ENCODE measurements at regions of chr11 and their contacts with region 1.

Region 1: GRCh38 chr11:95705485-95706124 is 84.0 kb downstream of the FAM76B start:
- H3K4me3 ChIP-seq: no peak overlapping the region
- H3K27ac ChIP-seq: no peak overlapping the region
- H3K4me1 ChIP-seq: no peaks in the 10 kb centered on the region
- CTCF ChIP-seq: peak; percentile 58; the same call in 1 of the 2 replicates

Region 2: DNA sequence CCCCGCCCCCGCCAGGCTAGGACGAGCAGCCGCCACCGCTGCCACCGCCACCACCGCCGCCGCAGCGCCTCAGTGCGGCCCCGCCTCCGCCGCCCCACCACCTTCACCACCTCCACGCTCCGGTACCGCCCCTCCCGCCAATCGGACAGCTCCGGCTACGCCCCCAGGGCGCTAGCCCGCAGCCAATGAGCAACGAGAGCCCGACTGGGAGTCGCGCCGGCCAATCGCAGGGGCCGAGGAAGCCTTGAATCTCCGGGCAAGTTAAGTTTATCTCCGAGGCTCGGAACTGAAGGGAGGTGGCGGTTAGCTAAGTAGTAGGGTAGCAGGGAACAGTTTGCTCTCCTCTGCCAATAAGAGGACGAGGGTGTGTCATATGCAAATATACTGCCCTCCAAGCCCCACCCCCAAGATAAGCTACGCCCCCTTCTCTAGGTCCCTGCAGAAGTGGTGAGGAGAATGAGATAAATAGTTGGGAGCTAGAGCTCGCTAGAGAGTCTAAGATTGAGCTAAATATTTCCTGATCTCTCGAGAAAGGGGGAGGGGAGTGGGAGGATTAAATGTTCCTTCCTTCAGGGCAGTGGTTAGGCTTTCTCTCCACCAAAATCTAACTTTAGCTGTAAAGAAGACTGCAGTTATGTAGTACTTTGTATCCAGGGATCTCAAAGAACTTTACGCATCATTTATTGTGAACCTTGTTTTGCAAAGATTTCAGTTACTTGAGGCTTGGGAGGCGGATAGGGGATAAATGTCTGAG is 474.3 kb before region 1 on chr11 and contains the start of gene SESN3:
- CTCF ChIA-PET with region 1: interaction called, 12 read pairs
- POLR2A ChIA-PET with region 1: interaction called, 5 read pairs
- H3K4me3 ChIP-seq: peak within 1 kb of the TSS; percentile 82
- H3K27ac ChIP-seq: peak within 1 kb of the TSS; percentile 87
- H3K4me1 ChIP-seq: peaks cover 6% of the 10 kb centered on the region
- CTCF ChIP-seq: no peak

Region 3: DNA sequence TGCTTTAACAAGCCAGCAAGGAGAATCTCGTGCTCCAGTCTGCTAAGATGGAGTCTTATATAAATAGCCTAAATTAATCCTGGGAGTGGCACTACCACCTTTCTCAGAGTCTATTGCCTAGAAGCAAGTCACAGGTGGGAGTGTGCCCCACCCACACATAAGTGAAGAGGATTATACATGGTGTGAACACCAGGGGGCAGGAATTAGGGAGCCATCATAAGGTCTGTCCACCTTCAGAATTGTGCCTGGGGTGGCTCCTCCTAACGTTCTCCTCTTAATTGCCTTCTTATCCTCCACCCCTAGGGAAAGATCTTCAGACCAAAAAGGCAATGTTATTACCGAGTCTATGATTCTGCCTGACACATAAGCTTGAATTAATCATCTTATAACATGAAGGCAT is 197.8 kb before region 1 on chr11:
- CTCF ChIA-PET with region 1: interaction called, 10 read pairs
- POLR2A ChIA-PET with region 1: no interaction called
- H3K4me3 ChIP-seq: no peak overlapping the region
- H3K27ac ChIP-seq: no peak overlapping the region
- H3K4me1 ChIP-seq: no peaks in the 10 kb centered on the region; the same call in 1 of the 2 replicates
- CTCF ChIP-seq: no peak

Region 4: DNA sequence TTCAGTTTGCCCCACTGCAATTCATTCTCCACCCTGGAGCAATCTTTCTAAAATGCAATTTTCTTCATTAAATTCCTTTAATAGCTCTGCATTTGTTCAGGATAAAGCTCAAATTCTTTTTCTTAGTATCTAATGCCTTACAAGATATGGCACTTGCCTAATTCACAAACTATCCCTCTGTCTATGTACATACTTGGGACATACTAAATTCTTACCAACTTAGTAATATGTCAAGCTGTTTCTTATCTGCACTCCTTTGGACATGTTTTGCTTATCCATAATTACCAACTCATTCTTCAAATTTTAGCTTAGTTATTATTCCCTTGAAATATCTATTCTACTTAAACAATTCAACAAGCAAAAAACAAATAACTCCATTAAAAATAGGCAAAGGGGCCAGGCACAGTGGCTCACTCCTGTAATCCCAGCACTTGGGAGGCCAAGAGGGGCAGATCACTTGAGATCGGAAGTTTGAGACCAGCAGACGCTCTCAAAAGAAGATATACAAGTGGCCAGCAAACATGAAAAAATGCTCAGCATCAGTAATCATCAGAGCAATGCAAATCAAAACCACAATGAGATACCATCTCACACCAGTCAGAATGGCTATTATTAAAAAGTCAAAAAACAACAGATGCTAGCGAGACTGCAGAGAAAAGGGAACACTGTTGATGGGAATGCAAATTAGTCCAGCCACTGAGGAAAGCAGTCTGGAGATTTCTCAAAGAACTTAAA is 12.9 kb before region 1 on chr11:
- CTCF ChIA-PET with region 1: interaction called, 35 read pairs
- POLR2A ChIA-PET with region 1: no interaction called
- H3K4me3 ChIP-seq: no peak overlapping the region
- H3K27ac ChIP-seq: no peak overlapping the region
- H3K4me1 ChIP-seq: no peaks in the 10 kb centered on the region
- CTCF ChIP-seq: no peak

Region 5: DNA sequence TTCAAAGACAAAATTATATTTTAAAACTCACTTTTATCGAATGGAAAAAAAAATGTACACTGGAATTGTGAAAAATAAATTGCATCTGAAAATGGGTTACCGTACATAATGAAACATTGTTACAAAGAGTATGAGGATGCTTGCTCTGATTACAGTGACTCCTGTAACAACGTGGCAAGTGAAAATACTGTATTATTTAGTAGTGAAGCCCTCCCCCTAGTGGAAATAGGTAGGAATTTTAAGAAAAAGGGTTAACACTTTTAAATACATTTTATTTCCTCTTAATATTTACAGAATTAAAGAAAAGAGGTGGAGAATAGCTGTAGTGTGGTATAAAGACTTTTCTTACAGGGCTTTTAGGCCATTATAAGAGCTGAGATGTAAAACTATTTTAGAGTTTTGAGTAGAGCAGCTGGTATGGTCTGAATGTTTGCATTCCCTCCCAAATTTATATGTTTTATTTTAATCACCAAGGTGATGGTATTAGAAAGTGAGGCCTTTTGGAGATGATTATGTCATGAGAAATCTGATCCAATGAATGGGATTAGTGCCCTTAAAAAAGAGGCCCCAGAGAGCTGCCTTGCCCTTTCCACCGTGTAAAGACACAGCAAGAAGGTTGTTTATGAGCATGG is 58.8 kb after region 1 on chr11:
- CTCF ChIA-PET with region 1: interaction called, 26 read pairs
- POLR2A ChIA-PET with region 1: no interaction called
- H3K4me3 ChIP-seq: no peak overlapping the region
- H3K27ac ChIP-seq: no peak overlapping the region
- H3K4me1 ChIP-seq: no peaks in the 10 kb centered on the region
- CTCF ChIP-seq: no peak

Measured in HEK293 (cell line).